IMR-90 (cell line): ENCODE measurements at regions of chr9 and their contacts with region 1.

Region 1: DNA sequence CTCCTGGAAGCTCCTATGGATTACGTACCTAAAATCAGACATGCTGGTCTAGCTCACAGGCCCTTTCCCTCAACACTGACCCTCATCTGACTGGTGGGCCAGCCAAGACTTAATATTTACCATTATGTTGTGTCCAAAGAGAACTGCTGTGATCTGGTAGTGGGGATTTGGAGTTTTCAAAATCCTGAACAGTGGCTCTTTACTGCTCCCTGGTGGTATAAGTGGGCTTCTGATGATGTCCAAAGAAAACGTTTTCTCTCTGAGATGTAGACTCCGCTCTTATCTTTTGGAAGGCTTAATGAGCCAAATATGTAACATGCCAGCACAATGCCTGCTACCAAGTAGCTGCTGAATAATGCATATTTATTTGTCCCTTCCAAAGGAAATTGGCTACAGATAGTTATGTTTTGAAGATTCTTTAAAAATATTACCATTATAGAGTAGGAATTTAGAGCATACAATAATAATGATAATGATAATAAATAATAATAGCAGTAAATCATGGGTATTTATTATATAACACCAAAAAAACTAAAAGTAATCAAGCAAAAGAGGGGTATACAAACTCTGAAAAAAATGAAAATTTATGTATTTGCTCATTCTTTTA is 406.6 kb upstream of the TNC start:
- DNase-seq: peak; percentile 77
- ATAC-seq: peak; percentile 95
- H3K4me3 ChIP-seq: no peak overlapping the region
- H3K27ac ChIP-seq: no peak overlapping the region
- H3K4me1 ChIP-seq: peaks cover 2% of the 10 kb centered on the region
- H3K27me3 ChIP-seq: no peaks in the 10 kb centered on the region
- CTCF ChIP-seq: peak; percentile 89
- POLR2A ChIP-seq: no peak
- RAD21 ChIP-seq: peak; percentile 93

Region 2: GRCh38 chr9:114662081-114662989 is 862.2 kb before region 1 on chr9:
- CTCF ChIA-PET with region 1: no interaction called
- POLR2A ChIA-PET with region 1: no interaction called
- dilution Hi-C with region 1: no loop called
- in situ Hi-C with region 1: no loop called
- intact Hi-C with region 1: loop called (anchors 5 kb)
- DNase-seq: peak; percentile 33
- ATAC-seq: peak; percentile 98
- H3K4me3 ChIP-seq: no peak overlapping the region
- H3K27ac ChIP-seq: no peak overlapping the region
- H3K4me1 ChIP-seq: no peaks in the 10 kb centered on the region
- H3K27me3 ChIP-seq: peaks cover 30% of the 10 kb centered on the region
- CTCF ChIP-seq: peak; percentile 84
- POLR2A ChIP-seq: no peak
- RAD21 ChIP-seq: peak; percentile 92

Region 3: DNA sequence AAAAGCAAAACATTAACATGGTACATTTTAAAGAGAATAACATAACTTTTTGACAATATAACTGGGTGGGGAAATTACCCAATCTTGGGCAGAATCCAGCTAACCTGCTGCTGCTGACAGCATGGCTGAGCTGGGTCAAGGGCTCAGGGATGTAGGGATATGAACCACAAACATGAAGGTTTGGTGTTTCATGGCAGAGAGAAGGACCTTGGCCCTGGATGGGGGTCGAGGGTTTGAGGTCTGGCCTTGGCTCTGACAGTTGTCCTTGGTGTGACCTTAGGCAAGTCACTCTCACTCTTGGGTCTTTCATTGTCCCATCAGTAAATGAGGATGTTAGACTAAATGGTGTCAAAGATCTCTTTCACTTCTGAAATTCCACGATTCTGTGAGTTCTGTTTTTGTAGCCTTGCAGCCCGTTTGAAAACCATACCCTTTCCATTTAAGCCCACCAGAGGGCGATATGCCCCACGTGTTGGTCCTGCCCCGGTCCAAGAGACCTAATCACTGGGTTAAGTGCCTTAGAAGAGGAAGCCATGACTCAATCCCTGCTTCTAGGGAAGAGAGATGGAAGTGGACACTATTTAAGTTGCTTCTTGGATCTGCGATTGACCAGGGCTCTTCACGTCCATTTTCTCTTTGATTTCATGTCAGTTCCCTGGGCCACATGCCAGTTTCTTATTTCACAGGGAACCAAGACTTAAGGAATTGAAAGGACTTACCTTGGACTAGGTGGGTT is 785.8 kb before region 1 on chr9:
- CTCF ChIA-PET with region 1: no interaction called
- POLR2A ChIA-PET with region 1: no interaction called
- dilution Hi-C with region 1: no loop called
- in situ Hi-C with region 1: loop called (anchors 10 kb)
- intact Hi-C with region 1: loop called (anchors 1 kb)
- DNase-seq: peak; percentile 89
- ATAC-seq: peak; percentile 95
- H3K4me3 ChIP-seq: no peak overlapping the region
- H3K27ac ChIP-seq: no peak overlapping the region
- H3K4me1 ChIP-seq: peaks cover 2% of the 10 kb centered on the region; the same call in 1 of the 2 replicates
- H3K27me3 ChIP-seq: no peaks in the 10 kb centered on the region; the same call in none of the 2 replicates
- CTCF ChIP-seq: peak; percentile 97
- POLR2A ChIP-seq: peak; percentile 58; the same call in 1 of the 2 replicates
- RAD21 ChIP-seq: peak; percentile 99

Region 4: GRCh38 chr9:115035841-115036612 is 488.5 kb before region 1 on chr9:
- CTCF ChIA-PET with region 1: no interaction called
- POLR2A ChIA-PET with region 1: no interaction called
- dilution Hi-C with region 1: no loop called
- in situ Hi-C with region 1: no loop called
- intact Hi-C with region 1: loop called (anchors 5 kb)
- DNase-seq: peak; percentile 86
- ATAC-seq: peak; percentile 51
- H3K4me3 ChIP-seq: no peak overlapping the region
- H3K27ac ChIP-seq: peak overlapping the region; percentile 79; the same call in 1 of the 2 replicates
- H3K4me1 ChIP-seq: peaks cover 19% of the 10 kb centered on the region
- H3K27me3 ChIP-seq: no peaks in the 10 kb centered on the region
- CTCF ChIP-seq: no peak
- POLR2A ChIP-seq: no peak
- RAD21 ChIP-seq: no peak

Region 5: DNA sequence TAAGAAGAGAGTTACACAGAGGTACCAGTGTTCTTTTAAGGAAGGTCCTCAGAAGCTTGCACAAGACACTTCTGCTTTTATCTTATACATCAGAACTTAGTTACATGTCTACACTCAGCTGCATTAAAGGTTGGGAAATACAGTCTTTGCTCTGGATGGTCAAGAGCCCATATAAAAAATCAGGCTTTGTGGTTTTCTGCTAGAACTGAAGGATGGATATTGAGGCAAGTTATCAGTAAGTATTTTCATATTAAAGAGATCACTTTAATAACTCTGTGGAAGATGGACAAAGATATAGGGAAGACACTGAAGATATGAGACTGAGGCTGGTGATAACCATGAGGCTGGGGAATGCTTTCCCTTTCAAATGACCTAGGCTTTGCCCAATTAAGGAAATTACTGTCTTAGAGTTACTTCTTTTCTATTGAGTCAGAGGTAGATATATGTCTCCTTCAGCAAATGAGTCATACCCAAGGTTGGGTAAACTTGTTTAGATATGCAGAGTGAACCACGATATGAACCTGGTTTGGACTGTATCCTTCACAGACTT is 319.6 kb before region 1 on chr9:
- CTCF ChIA-PET with region 1: no interaction called
- POLR2A ChIA-PET with region 1: no interaction called
- dilution Hi-C with region 1: no loop called
- in situ Hi-C with region 1: no loop called
- intact Hi-C with region 1: loop called (anchors 1 kb)
- DNase-seq: peak; percentile 95
- ATAC-seq: peak; percentile 64
- H3K4me3 ChIP-seq: no peak overlapping the region
- H3K27ac ChIP-seq: peak overlapping the region; percentile 88
- H3K4me1 ChIP-seq: peaks cover 28% of the 10 kb centered on the region
- H3K27me3 ChIP-seq: no peaks in the 10 kb centered on the region
- CTCF ChIP-seq: no peak
- POLR2A ChIP-seq: no peak
- RAD21 ChIP-seq: no peak

Region 6: GRCh38 chr9:115373000-115373709 is 151.4 kb before region 1 on chr9:
- CTCF ChIA-PET with region 1: no interaction called
- POLR2A ChIA-PET with region 1: no interaction called
- dilution Hi-C with region 1: no loop called
- in situ Hi-C with region 1: no loop called
- intact Hi-C with region 1: loop called (anchors 2 kb)
- DNase-seq: peak; percentile 98
- ATAC-seq: peak; percentile 81
- H3K4me3 ChIP-seq: no peak overlapping the region
- H3K27ac ChIP-seq: peak overlapping the region; percentile 86
- H3K4me1 ChIP-seq: peaks cover 10% of the 10 kb centered on the region
- H3K27me3 ChIP-seq: no peaks in the 10 kb centered on the region
- CTCF ChIP-seq: no peak
- POLR2A ChIP-seq: no peak
- RAD21 ChIP-seq: no peak; the same call in 1 of the 2 replicates